ENCODE measurements at regions of chr6 and their contacts with region 1.

Region 1: GRCh38 chr6:166989427-166990032 is 9.7 kb upstream of the CEP43 start:
- DNase-seq: peak; percentile 89
- H3K4me3 Mint-ChIP-seq: no peak overlapping the region
- H3K27ac Mint-ChIP-seq: no peak overlapping the region
- H3K4me1 Mint-ChIP-seq: peaks cover 44% of the 10 kb centered on the region
- H3K27me3 Mint-ChIP-seq: no peaks in the 10 kb centered on the region

Region 2: GRCh38 chr6:166786704-166787293 is 202.7 kb before region 1 on chr6:
- intact Hi-C with region 1: loop called (anchors 1 kb)
- DNase-seq: peak; percentile 78
- H3K4me3 Mint-ChIP-seq: no peak overlapping the region
- H3K27ac Mint-ChIP-seq: no peak overlapping the region
- H3K4me1 Mint-ChIP-seq: no peaks in the 10 kb centered on the region
- H3K27me3 Mint-ChIP-seq: peaks cover 12% of the 10 kb centered on the region

Region 3: GRCh38 chr6:167200806-167201205 is 211.3 kb after region 1 on chr6:
- intact Hi-C with region 1: no loop called
- DNase-seq: no peak
- H3K4me3 Mint-ChIP-seq: no peak overlapping the region
- H3K27ac Mint-ChIP-seq: no peak overlapping the region
- H3K4me1 Mint-ChIP-seq: no peaks in the 10 kb centered on the region
- H3K27me3 Mint-ChIP-seq: peaks cover 17% of the 10 kb centered on the region

Region 4: GRCh38 chr6:167266830-167267555 is 277.5 kb after region 1 on chr6:
- intact Hi-C with region 1: no loop called
- DNase-seq: no peak
- H3K4me3 Mint-ChIP-seq: no peak overlapping the region
- H3K27ac Mint-ChIP-seq: no peak overlapping the region
- H3K4me1 Mint-ChIP-seq: no peaks in the 10 kb centered on the region
- H3K27me3 Mint-ChIP-seq: peaks cover 15% of the 10 kb centered on the region

Measured in activated CD4-positive, alpha-beta T cell treated with anti-CD3 and anti-CD28 coated beads, Interleukin-2, amount 10 ng/mL, durations not matched to agents 24 days and 14 days (primary cell).